ENCODE measurements at regions of chr6 and their contacts with region 1.

Region 1: GRCh38 chr6:81752138-81752920 is at the start of gene TENT5A:
- DNase-seq: peak; percentile 94
- H3K4me3 ChIP-seq: peak within 1 kb of the TSS; percentile 74 to 84
- H3K27ac ChIP-seq: peak within 1 kb of the TSS; percentile 93 to 95
- H3K4me1 ChIP-seq: no peaks in the 10 kb centered on the region
- H3K27me3 ChIP-seq: no peaks in the 10 kb centered on the region
- CTCF ChIP-seq: peak in 1 of 4 experiments; percentile 2
- POLR2A ChIP-seq: peak; percentile 88
- total RNA-seq, gene TENT5A: 11.9 to 12.0 TPM

Region 2: DNA sequence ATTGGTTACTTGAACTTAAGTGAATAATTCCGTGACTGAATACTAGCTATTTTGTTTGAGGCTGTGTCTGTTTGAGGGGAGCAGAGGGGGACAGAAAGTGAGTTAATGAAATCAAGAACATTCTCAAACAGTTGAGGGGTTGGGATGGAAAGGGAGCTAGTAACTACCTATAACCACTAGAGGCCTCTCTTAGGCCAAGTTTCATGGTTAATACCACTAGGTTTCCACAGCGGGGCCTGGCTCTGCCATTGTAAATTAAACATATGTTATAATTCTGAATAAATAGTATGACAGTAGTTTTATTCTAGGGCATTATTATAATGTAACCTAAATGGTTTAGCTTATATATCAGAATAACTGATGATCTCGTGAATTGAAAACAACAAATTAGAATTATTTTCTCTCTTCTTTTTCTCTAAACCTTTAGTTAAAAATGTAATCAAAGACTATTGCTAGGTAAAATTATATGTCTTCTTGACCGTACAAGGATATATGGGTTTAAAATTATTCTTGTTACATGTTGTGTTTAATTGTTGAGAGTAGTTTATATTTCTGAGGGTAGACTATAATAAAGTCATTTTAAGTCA is 1537.8 kb before region 1 on chr6:
- intact Hi-C with region 1: loop called (anchors 2 kb)
- DNase-seq: peak; percentile 10
- H3K4me3 ChIP-seq: no peak overlapping the region
- H3K27ac ChIP-seq: no peak overlapping the region
- H3K4me1 ChIP-seq: no peaks in the 10 kb centered on the region
- H3K27me3 ChIP-seq: no peaks in the 10 kb centered on the region
- CTCF ChIP-seq: peak; percentile 11 to 69 (median 44)
- POLR2A ChIP-seq: no peak

Region 3: GRCh38 chr6:80605165-80605989 is 1147.0 kb before region 1 on chr6:
- intact Hi-C with region 1: loop called (anchors 5 kb)
- DNase-seq: no peak
- H3K4me3 ChIP-seq: no peak overlapping the region
- H3K27ac ChIP-seq: no peak overlapping the region
- H3K4me1 ChIP-seq: no peaks in the 10 kb centered on the region
- H3K27me3 ChIP-seq: no peaks in the 10 kb centered on the region
- CTCF ChIP-seq: peak in 3 of 4 experiments; percentile 50 to 57 (median 53)
- POLR2A ChIP-seq: no peak

Region 4: DNA sequence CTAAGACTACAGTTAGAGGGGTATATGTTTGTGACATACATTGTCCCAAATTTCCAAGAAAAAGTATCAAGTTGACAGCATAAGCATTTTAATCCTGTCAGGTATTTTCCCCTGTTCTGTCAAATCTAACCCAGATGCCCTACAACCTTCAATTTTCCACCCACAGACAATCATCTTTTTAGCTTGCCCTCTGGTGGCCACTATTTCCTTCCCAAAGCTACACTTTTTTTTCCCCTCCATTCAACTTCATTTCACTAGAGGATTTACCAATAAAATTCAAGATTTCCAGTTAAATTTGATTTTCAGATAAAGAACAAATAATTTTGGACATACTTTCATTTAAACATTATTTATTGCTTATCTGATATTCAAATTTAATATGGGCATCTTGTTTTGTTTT is 286.5 kb before region 1 on chr6:
- intact Hi-C with region 1: no loop called
- DNase-seq: no peak
- H3K4me3 ChIP-seq: no peak overlapping the region
- H3K27ac ChIP-seq: no peak overlapping the region
- H3K4me1 ChIP-seq: no peaks in the 10 kb centered on the region
- H3K27me3 ChIP-seq: no peaks in the 10 kb centered on the region
- CTCF ChIP-seq: peak in 1 of 4 experiments; percentile 24
- POLR2A ChIP-seq: no peak

Region 5: GRCh38 chr6:82017288-82017687 is 265.0 kb after region 1 on chr6:
- intact Hi-C with region 1: loop called (anchors 10 kb)
- DNase-seq: no peak
- H3K4me3 ChIP-seq: no peak overlapping the region
- H3K27ac ChIP-seq: no peak overlapping the region
- H3K4me1 ChIP-seq: peaks cover 11% of the 10 kb centered on the region
- H3K27me3 ChIP-seq: no peaks in the 10 kb centered on the region
- CTCF ChIP-seq: no peak
- POLR2A ChIP-seq: no peak